ENCODE measurements at regions of chr4 and their contacts with region 1.

Region 1: DNA sequence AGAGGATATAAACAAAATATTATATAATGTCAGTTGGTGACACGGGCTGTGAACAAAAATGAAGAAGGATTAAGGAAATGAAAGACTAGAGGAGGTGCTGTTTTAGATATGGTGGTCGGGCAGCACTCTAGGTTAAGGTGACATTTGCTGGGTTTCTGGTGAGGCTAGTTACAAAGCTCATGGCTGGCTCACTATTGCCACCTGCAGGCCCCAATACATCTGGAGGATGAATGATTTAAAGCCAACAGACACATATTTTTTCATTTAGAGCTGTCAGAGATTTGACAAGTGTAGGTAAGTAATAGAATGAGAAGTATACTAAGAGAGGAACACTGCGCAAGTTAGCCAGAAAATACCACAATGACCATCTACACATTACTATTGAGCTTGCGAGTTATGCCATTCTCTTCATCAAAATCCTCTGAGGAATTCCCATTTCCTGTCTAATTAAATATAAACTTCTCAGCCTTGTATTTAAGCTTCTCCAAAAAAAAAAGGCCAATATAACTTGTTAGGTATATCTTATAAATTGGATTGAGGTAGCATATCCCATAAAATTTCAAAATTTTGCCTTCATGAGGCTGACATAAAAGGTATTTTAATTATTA is 6.4 kb upstream of the FGG start:
- DNase-seq: peak; percentile 21
- ATAC-seq: peak; percentile 88
- H3K4me3 ChIP-seq: no peak overlapping the region
- H3K27ac ChIP-seq: no peak overlapping the region
- H3K4me1 ChIP-seq: peaks cover 13% of the 10 kb centered on the region
- H3K27me3 ChIP-seq: no peaks in the 10 kb centered on the region
- CTCF ChIP-seq: peak; percentile 68 to 82 (median 69)
- EP300 ChIP-seq: no peak
- POLR2A ChIP-seq: no peak
- RAD21 ChIP-seq: peak; percentile 63

Region 2: DNA sequence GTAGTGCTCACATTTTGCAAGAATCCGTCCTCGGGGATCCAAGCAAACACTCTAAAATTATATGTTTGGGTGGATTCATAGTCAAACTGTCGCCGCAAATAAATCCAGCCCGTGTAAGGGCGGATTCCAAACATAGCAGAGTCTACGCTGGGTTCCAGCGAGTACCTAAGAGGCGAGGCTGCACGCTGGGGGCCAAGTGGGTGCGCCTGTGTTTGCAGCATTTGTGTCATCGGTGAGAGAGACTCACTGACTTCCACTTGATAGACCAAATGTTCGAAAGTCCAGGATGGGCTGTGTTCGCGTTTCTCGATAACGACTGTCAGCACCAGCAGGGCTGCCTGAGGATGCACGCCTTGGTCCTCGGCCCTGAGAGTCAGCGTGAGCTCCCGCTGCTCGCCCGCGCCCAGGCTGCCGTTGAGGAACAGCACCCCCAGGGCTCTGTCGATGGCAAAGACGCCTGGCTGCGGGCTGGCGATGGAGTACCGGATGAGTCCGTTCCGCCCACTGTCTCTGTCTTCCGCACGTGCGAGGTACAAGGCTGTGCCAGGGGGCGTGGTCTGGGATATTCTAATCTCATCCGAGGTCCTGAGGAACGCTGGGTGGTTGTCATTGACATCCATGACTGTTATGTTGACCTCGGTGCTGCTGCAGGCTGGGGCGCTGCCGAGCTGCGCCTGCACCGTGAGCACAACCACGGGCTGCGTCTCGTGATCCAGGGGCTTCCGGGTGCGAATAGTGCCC is 286.0 kb before region 1 on chr4:
- CTCF ChIA-PET with region 1: interaction called, 4 read pairs
- POLR2A ChIA-PET with region 1: no interaction called
- RAD21 ChIA-PET with region 1: no interaction called
- SMC1A ChIA-PET with region 1: interaction called, 7 read pairs
- in situ Hi-C with region 1: no loop called
- intact Hi-C with region 1: loop called (anchors 2 kb)
- DNase-seq: peak; percentile 11
- ATAC-seq: peak; percentile 90
- H3K4me3 ChIP-seq: peak overlapping the region; percentile 46; the same call in 1 of the 2 replicates
- H3K27ac ChIP-seq: no peak overlapping the region
- H3K4me1 ChIP-seq: peaks cover 7% of the 10 kb centered on the region
- H3K27me3 ChIP-seq: peaks cover 2 to 5% of the 10 kb centered on the region in 2 experiments; a peak in 2 of 4 replicates
- CTCF ChIP-seq: peak in 2 of 3 experiments; percentile 19 to 26; a peak in 3 of 6 replicates
- EP300 ChIP-seq: no peak
- POLR2A ChIP-seq: no peak
- RAD21 ChIP-seq: no peak

Region 3: GRCh38 chr4:154559494-154560418 is 59.1 kb before region 1 on chr4:
- CTCF ChIA-PET with region 1: interaction called, 796 read pairs
- POLR2A ChIA-PET with region 1: no interaction called
- RAD21 ChIA-PET with region 1: interaction called, 88 read pairs
- SMC1A ChIA-PET with region 1: interaction called, 112 read pairs
- in situ Hi-C with region 1: loop called (anchors 5 kb)
- intact Hi-C with region 1: loop called (anchors 1 kb)
- DNase-seq: no peak
- ATAC-seq: peak; percentile 95
- H3K4me3 ChIP-seq: no peak overlapping the region
- H3K27ac ChIP-seq: no peak overlapping the region
- H3K4me1 ChIP-seq: no peaks in the 10 kb centered on the region
- H3K27me3 ChIP-seq: no peaks in the 10 kb centered on the region
- CTCF ChIP-seq: peak; percentile 48 to 83 (median 53)
- EP300 ChIP-seq: no peak
- POLR2A ChIP-seq: no peak
- RAD21 ChIP-seq: peak; percentile 90

Region 4: GRCh38 chr4:154602404-154603020 is 16.3 kb before region 1 on chr4:
- CTCF ChIA-PET with region 1: interaction called, 10 read pairs
- POLR2A ChIA-PET with region 1: interaction called, 4 read pairs
- RAD21 ChIA-PET with region 1: no interaction called
- SMC1A ChIA-PET with region 1: interaction called, 7 read pairs
- in situ Hi-C with region 1: no loop called
- intact Hi-C with region 1: no loop called
- DNase-seq: no peak
- ATAC-seq: no peak
- H3K4me3 ChIP-seq: no peak overlapping the region
- H3K27ac ChIP-seq: no peak overlapping the region
- H3K4me1 ChIP-seq: no peaks in the 10 kb centered on the region
- H3K27me3 ChIP-seq: no peaks in the 10 kb centered on the region
- CTCF ChIP-seq: no peak
- EP300 ChIP-seq: no peak
- POLR2A ChIP-seq: no peak
- RAD21 ChIP-seq: no peak

Region 5: GRCh38 chr4:154642373-154643009 is 23.7 kb after region 1 on chr4:
- CTCF ChIA-PET with region 1: interaction called, 11 read pairs
- POLR2A ChIA-PET with region 1: no interaction called
- RAD21 ChIA-PET with region 1: no interaction called
- SMC1A ChIA-PET with region 1: interaction called, 7 read pairs
- in situ Hi-C with region 1: no loop called
- intact Hi-C with region 1: no loop called
- DNase-seq: no peak
- ATAC-seq: no peak
- H3K4me3 ChIP-seq: no peak overlapping the region
- H3K27ac ChIP-seq: no peak overlapping the region
- H3K4me1 ChIP-seq: no peaks in the 10 kb centered on the region
- H3K27me3 ChIP-seq: no peaks in the 10 kb centered on the region
- CTCF ChIP-seq: no peak
- EP300 ChIP-seq: no peak
- POLR2A ChIP-seq: no peak
- RAD21 ChIP-seq: no peak